T-cell (primary cell): ENCODE measurements at regions of chr2 and their contacts with region 1.

Region 1: DNA sequence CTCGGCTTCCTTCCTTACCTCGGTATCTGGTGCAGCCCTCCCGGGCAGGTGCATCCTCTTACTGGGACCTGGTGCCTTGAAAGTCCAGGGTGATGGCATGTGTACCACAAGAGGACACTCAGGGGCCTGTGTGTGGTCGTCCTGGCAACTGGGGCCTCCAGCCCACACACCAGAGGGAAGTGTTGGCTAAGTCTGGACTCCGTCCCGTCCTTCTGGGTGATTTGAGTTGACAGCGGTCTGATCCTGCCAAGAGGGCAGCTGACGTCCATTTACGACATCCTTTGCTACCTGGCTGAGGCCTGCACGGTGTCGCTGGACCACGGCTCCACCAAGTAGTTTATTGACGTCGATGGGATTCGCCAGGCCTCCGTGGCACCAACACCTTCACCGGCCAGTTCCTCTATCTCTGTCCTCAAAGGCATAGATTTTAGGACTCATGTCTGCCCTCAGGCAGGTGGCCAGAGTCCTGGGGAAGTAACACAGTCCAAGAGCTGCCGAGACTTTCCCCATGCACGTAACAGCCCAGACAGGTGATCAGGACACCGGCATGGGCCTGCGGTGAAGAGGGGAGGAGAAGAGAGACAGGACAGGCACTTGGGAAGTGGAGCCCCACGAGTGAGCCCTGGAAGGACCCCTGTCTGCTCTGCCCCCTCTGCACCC is 186.0 kb upstream of the HDAC4 start:
- DNase-seq: no peak
- ATAC-seq: no peak
- H3K4me3 ChIP-seq: no peak overlapping the region
- H3K4me3 Mint-ChIP-seq: no peak overlapping the region
- H3K27ac ChIP-seq: no peak overlapping the region
- H3K27ac Mint-ChIP-seq: no peak overlapping the region
- H3K4me1 ChIP-seq: peaks cover 0 to 4% of the 10 kb centered on the region in 2 experiments
- H3K4me1 Mint-ChIP-seq: no peaks in the 10 kb centered on the region
- H3K27me3 ChIP-seq: peaks cover 0 to 39% of the 10 kb centered on the region in 2 experiments
- H3K27me3 Mint-ChIP-seq: peaks cover 0 to 4% of the 10 kb centered on the region in 2 donors

Region 2: DNA sequence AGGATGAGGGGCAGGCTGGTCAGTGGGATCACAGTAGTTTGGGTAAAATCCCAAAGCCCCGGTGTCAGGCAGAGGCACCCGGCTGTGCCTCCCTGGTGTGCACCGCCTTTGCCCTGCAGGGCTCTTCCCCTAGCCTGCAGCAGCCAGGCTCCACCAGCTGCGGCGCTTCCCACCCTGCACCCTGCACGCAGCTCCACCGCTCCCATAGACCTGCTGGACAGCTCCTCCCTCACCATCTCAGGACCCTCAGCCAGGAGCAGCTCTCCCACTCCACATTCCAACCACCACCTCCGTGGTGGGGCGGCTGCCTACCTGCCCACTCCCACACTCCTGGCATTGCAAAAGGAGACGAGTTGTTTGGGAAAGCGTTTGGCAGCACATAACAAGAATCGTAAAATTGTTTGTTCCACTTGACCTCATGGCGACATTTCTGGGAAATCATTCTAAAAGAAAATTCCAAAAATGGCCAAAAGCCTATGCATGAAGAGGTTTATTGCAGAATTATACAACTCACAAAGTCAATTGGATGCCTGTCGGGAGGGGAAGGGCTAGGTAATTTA is 101.4 kb after region 1 on chr2:
- CTCF ChIA-PET with region 1: no interaction called
- POLR2A ChIA-PET with region 1: no interaction called
- DNase-seq: peak in 1 of 35 experiments; percentile 11
- ATAC-seq: no peak
- H3K4me3 ChIP-seq: no peak overlapping the region
- H3K4me3 Mint-ChIP-seq: no peak overlapping the region
- H3K27ac ChIP-seq: no peak overlapping the region
- H3K27ac Mint-ChIP-seq: no peak overlapping the region
- H3K4me1 ChIP-seq: no peaks in the 10 kb centered on the region
- H3K4me1 Mint-ChIP-seq: no peaks in the 10 kb centered on the region
- H3K27me3 ChIP-seq: peaks cover 0 to 49% of the 10 kb centered on the region in 2 experiments
- H3K27me3 Mint-ChIP-seq: peaks cover 24 to 25% of the 10 kb centered on the region in 2 donors

Region 3: DNA sequence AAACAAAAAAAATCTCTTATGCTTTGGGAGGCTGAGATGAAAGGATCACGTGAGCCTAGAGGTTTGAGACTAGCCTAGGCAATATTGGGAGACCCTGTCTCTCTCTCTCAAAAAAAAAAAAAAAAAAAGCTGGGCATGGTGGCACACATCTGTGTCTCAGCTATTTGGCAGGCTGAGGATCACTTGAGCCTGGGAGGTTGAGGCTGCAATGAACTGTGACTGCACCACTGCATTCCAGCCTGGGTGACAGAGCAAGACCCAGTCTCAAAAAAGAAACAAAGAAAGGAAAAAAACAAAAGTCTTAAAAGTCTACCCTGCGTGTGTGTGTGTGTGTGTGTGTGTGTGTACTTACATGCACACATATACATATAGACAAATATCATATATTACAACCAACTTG is 491.9 kb after region 1 on chr2:
- CTCF ChIA-PET with region 1: no interaction called
- POLR2A ChIA-PET with region 1: interaction called in 1 of 2 experiments, 10 read pairs
- DNase-seq: no peak
- ATAC-seq: no peak
- H3K4me3 ChIP-seq: no peak overlapping the region
- H3K4me3 Mint-ChIP-seq: no peak overlapping the region
- H3K27ac ChIP-seq: no peak overlapping the region
- H3K27ac Mint-ChIP-seq: no peak overlapping the region
- H3K4me1 ChIP-seq: no peaks in the 10 kb centered on the region
- H3K4me1 Mint-ChIP-seq: no peaks in the 10 kb centered on the region
- H3K27me3 ChIP-seq: peaks cover 0 to 15% of the 10 kb centered on the region in 2 experiments
- H3K27me3 Mint-ChIP-seq: peaks cover 19 to 24% of the 10 kb centered on the region in 2 donors